Heart right ventricle (tissue), 16 donors: ENCODE measurements at regions of chr1 and their contacts with region 1.

Region 1: DNA sequence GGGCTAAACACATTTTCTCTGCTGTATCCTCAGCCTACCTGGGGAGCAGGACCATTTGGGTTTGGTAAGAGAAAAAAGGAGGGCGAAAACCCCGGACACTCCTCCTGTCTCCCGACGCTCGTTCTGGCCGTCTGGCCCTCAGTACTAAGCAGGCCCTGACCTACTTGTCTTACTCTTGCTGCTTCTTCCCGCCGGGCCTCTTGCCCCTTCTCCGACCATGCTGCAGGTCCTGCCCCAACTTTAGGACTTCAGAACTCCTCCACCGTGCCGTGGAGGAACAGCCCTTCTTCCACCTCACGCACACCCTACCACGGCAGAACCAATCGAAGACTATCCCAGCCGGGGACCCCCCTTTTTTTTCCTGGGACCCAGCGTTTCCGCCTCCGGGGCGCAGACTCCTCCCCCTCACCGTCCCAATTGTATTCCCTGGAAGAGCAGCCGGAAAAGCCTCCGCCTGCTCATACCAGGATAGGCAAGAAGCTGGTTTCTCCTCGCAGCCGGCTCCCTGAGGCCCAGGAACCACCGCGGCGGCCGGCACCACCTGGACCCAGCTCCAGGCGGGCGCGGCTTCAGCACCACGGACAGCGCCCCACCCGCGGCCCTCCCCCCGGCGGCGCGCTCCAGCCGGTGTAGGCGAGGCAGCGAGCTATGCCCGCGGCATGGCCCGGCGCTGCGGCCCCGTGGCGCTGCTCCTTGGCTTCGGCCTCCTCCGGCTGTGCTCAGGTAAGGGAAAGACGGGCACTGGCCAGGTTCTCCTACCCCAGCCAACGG is at the start of gene CHRNB2:
- DNase-seq: peak; percentile 56 to 73
- ATAC-seq: peak; percentile 92 to 98 (median 94)
- H3K4me3 ChIP-seq: peak within 1 kb of the TSS in 5 of 10 donors; percentile 13 to 34 (median 24)
- H3K27ac ChIP-seq: no peak within 1 kb of the TSS
- H3K4me1 ChIP-seq: peaks cover 3 to 14% (median 9%) of the 10 kb centered on the region in 9 donors
- H3K27me3 ChIP-seq: peaks cover 0 to 29% (median 11%) of the 10 kb centered on the region in 7 donors
- CTCF ChIP-seq: no peak
- total RNA-seq, gene CHRNB2: 0.06 to 0.13 (median 0.07) TPM in 3 of 10 donors, not detected in the others

Region 2: DNA sequence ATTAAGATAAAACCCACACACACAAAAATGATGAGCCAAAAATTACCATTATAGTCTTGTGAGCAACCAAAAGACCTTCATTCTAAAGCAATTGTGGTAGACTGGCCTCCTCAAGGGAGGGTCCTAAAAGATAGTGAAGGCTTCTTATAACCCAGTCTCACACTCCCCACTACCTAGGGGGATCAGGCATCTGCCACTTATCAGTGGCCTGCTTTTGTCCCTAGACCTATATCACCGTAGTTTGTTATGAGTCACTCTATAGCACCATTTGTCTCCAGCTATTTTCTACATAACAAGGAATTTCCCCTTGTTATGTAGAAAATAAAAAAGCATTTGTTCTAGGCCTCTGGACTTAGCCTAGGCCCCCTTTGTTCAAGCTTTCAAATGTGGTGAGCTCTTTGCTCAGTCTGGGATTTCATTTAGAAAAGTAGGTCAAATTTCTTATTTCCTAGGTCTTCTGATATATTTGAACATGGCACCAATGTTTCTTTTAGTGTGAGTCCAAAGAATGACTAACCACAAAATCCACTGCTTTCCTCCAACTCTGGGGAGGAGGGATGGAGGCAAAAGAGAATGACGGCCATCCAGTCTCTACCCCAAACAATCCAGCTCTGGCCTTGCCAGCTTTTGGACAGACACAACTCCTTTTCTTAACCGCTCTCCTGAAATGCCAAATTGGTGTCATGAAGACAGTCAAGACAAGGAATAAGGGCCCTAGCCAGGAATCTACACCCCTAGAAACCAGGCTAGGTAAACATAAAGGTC is 31.5 kb after region 1 on chr1:
- intact Hi-C with region 1: loop called in 2 of 10 experiments (anchors 5 kb)
- DNase-seq: no peak
- ATAC-seq: peak in 3 of 8 donors; percentile 5 to 22 (median 21)
- H3K4me3 ChIP-seq: no peak overlapping the region
- H3K27ac ChIP-seq: peak overlapping the region in 9 of 10 donors; percentile 2 to 79 (median 57)
- H3K4me1 ChIP-seq: peaks cover 18 to 60% (median 52%) of the 10 kb centered on the region in 9 donors
- H3K27me3 ChIP-seq: no peaks in the 10 kb centered on the region
- CTCF ChIP-seq: no peak

Region 3: DNA sequence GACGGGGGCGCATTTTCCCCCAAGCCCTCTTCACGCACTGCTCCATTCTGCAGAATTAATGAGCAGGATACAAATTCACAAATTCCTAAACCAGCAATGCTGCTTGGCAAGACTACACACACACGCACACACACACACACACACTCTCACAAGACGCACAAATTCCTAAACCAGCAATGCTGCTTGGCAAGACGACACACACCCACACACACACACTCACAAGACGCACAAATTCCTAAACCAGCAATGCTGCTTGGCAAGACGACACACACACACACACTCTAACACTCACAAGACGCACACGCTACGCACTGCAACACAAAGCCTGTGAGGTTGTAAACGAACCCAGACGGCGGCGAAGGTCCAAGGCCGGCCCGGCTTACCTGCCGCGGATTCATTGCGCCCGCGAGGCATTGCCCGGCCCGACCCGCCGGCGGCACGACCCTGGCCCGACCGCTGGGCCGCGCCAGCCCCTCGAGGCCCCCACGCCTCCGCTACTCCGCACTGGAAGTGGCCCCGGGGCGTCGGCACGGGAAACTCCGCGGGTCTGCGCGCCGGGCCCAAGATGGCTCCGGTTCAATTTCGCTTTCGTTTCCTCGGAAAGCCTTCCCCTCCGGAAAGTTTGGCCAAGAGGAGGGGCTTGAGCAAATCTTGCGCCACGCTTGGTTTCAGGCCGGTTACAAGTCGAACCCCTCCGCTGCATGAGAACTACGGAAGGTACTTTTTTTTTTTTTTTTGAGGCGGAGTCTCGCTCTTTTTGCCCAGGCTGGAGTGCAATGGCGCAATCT is 40.2 kb after region 1 on chr1 and contains the start of gene ADAR:
- intact Hi-C with region 1: loop called in 2 of 10 experiments (anchors 5 kb)
- DNase-seq: peak; percentile 86 to 95
- ATAC-seq: peak; percentile 83 to 95 (median 94)
- H3K4me3 ChIP-seq: peak within 1 kb of the TSS; percentile 66 to 99 (median 90)
- H3K27ac ChIP-seq: peak within 1 kb of the TSS; percentile 87 to 99 (median 98)
- H3K4me1 ChIP-seq: peaks cover 4 to 82% (median 60%) of the 10 kb centered on the region in 9 donors
- H3K27me3 ChIP-seq: no peaks in the 10 kb centered on the region
- CTCF ChIP-seq: no peak
- total RNA-seq, gene ADAR: 45.3 to 103 (median 55.3) TPM

Region 4: GRCh38 chr1:154623358-154623757 is 55.8 kb after region 1 on chr1:
- intact Hi-C with region 1: no loop called
- DNase-seq: no peak
- ATAC-seq: peak in 1 of 8 donors; percentile 33
- H3K4me3 ChIP-seq: no peak overlapping the region
- H3K27ac ChIP-seq: peak overlapping the region in 1 of 10 donors; percentile 52
- H3K4me1 ChIP-seq: peaks cover 0 to 81% (median 31%) of the 10 kb centered on the region in 9 donors
- H3K27me3 ChIP-seq: no peaks in the 10 kb centered on the region
- CTCF ChIP-seq: no peak

Region 5: DNA sequence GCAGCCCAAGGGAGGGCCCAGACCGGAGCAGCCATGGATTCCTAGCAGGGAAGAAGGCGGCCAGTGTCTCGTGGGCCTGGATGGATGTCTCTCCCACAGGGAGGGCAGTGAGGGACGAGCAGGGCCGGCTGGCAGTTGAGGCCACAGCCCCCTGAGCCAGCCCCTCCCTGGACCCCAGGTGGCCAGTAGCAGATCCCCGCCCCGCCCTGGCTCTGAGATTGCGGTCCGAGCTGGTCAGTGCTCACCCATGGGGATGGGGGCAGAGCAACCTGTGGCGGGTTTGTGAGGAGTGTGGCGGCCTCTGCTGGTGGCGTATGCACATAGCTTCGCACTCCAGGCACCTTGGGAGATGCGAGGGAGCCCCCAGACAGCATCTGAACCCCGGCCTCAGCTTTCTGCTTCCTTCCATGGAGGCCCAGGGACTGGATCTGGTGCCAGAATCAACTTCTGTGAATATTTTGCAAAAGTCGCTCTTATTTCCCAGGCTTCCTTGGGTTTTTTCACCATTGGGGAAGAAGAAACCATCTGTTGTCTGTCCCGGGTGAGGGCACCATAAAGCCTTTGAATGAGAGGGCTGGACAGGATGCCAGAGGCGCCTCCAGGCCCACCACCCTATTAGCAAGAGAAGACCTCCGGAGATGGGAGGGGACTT is 310.9 kb after region 1 on chr1:
- intact Hi-C with region 1: loop called in 3 of 10 experiments (anchors 5 kb)
- DNase-seq: peak; percentile 80 to 81
- ATAC-seq: peak; percentile 92 to 97 (median 96)
- H3K4me3 ChIP-seq: no peak overlapping the region
- H3K27ac ChIP-seq: no peak overlapping the region
- H3K4me1 ChIP-seq: peaks cover 0 to 7% (median 3%) of the 10 kb centered on the region in 9 donors
- H3K27me3 ChIP-seq: no peaks in the 10 kb centered on the region
- CTCF ChIP-seq: peak; percentile 82 to 92 (median 90)